Dorsolateral prefrontal cortex (tissue), 120 donors: ENCODE measurements at regions of chr15 and their contacts with region 1.

Region 1: DNA sequence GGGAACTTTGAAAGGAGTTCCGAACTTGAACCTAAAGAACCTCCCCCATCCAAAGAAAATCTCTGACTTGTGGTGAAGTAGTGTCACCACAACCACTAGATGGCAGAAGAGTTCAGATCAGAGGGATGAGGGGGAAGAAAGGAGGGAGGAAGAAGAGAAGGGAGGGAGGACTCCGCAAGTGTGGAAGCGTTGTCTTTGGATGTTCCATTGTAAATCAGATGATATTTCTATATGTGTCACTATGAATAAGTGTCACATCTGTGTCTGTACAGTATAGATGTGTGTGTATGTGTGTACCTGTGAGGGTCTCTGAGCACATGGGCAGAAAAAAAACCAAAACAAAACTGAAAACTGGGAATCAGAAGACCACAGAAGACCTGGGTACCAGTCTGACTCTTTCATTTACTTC is 16.9 kb downstream of the SLC24A1 start:
- DNase-seq: peak in 2 of 10 donors; percentile 17 to 33
- H3K4me3 ChIP-seq: peak overlapping the region in 53 of 59 donors; percentile 3 to 64 (median 39)
- H3K27ac ChIP-seq: no peak overlapping the region
- H3K27me3 ChIP-seq: no peaks in the 10 kb centered on the region
- CTCF ChIP-seq: peak; percentile 76 to 93 (median 85)

Region 2: DNA sequence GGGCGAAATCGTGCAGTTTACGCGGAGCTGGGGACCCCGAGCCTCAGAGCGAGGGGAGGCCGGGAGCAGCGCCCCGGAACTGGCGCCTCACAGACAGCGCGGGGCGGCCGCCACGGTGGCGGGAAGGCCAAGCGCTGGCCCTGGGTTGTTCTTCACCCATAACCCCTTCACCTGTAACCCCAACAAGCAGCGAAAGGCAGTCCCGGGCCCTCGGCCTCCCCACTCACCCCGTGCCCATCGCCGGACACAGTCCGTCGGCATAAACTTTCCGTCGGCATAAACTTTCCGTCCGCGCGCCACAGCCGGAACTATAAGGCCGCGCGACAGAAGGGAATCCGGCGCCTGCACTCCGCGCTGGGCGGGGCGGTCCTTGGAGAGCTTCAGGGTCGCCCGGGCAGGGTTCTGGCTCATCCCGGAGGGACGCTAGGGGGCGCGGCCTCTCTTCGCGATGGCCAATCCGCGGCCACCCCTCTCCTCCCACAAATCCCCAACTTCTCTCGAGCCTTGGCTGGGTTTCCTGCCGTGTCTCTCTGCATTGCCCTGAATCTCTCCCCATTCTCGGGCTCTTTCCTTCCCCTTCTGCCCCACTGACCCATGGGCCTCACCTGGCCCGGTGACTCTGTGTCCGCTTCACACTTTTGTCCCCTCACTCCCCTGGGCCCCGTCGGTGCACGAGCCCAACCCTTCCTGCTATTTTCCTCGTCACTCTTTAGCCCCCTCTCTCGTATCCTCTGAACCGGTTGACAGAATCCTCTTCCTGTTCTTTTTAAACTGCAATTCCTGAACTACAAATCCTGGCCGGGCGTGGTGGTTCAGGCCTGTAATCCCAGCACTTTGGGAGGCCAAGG is 27.6 kb before region 1 on chr15 and contains the start of gene INTS14:
- intact Hi-C with region 1: loop called in 1 of 2 experiments (anchors 1 kb)
- DNase-seq: peak; percentile 95 to 98 (median 97)
- H3K4me3 ChIP-seq: peak within 1 kb of the TSS; percentile 68 to 99 (median 91)
- H3K27ac ChIP-seq: peak within 1 kb of the TSS; percentile 66 to 98 (median 92)
- H3K27me3 ChIP-seq: no peaks in the 10 kb centered on the region
- CTCF ChIP-seq: peak; percentile 59 to 98 (median 88)
- total RNA-seq, gene INTS14: 16.3 to 35.6 (median 23.7) TPM

Region 3: DNA sequence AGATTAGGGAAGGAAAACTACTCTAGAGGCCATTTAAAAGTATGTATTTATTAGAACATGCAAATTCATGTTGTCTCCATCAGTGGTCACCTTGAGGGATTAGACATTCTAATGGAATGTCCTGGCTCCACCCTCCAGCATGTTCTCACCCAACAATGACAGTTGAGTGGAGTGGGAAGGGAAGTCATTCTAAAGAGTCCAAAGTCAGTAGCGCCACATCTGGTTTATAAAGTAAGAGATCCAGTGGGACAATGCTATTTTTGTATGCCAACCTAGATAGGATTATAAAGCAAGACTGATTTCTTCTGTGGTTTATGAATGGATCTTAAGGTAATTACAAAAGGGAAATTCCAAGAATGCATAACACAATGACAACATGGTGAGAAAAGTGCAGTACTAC is 16.3 kb after region 1 on chr15:
- intact Hi-C with region 1: no loop called
- DNase-seq: no peak
- H3K4me3 ChIP-seq: no peak overlapping the region
- H3K27ac ChIP-seq: peak overlapping the region in 1 of 59 donors; percentile 5
- H3K27me3 ChIP-seq: no peaks in the 10 kb centered on the region
- CTCF ChIP-seq: no peak

Region 4: GRCh38 chr15:65792130-65792987 is 153.7 kb after region 1 on chr15 and contains the start of gene DENND4A:
- intact Hi-C with region 1: loop called in 1 of 2 experiments (anchors 10 kb)
- DNase-seq: peak; percentile 94 to 98 (median 97)
- H3K4me3 ChIP-seq: peak within 1 kb of the TSS; percentile 48 to 95 (median 85)
- H3K27ac ChIP-seq: peak within 1 kb of the TSS; percentile 44 to 99 (median 97)
- H3K27me3 ChIP-seq: no peaks in the 10 kb centered on the region
- CTCF ChIP-seq: peak in 17 of 56 donors; percentile 2 to 50 (median 26)
- total RNA-seq, gene DENND4A: 52.0 to 89.8 (median 72.2) TPM

Region 5: DNA sequence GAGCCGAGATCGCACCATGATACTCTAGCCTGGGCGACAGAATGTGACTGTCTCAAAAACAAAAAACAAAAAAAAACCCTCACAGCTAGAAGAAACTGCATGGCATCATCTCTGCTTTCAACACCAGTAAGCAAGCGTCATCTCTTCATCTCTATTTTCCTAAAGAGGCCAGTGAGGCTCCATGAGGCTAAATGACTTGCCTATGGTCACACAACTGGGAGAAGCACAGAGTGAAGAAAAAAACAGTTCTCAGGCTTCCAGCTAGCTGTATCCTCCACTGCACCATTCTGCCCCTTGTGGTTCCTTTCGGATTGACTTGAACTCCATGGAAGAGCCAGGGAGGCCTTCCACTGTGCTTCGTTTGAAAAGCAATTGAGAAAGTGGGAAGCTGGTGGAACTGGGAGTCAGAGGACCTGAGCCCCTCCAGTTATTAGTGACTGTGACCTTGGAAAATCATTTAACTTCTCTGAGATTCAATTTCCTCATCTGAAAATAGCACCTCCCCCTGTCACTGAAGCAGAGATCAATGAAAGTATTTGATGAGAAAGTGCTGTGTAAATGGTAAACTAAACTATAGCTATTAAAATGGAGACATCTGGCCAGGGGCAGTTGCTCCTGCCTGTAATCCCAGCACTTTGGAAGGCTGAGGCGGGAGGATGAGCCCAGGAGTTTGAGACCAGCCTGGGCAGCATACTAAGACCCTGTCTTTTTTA is 185.5 kb after region 1 on chr15:
- intact Hi-C with region 1: loop called in 1 of 2 experiments (anchors 10 kb)
- DNase-seq: peak in 6 of 10 donors; percentile 10 to 54 (median 35)
- H3K4me3 ChIP-seq: no peak overlapping the region
- H3K27ac ChIP-seq: peak overlapping the region in 5 of 59 donors; percentile 1 to 35 (median 8)
- H3K27me3 ChIP-seq: no peaks in the 10 kb centered on the region
- CTCF ChIP-seq: peak in 55 of 56 donors; percentile 23 to 72 (median 58)

Region 6: GRCh38 chr15:65832549-65833364 is 194.1 kb after region 1 on chr15:
- intact Hi-C with region 1: loop called (anchors 10 kb)
- DNase-seq: peak in 9 of 10 donors; percentile 38 to 91 (median 48)
- H3K4me3 ChIP-seq: peak overlapping the region in 21 of 59 donors; percentile 0 to 42 (median 11)
- H3K27ac ChIP-seq: peak overlapping the region in 57 of 59 donors; percentile 12 to 89 (median 68)
- H3K27me3 ChIP-seq: no peaks in the 10 kb centered on the region
- CTCF ChIP-seq: peak in 2 of 56 donors; percentile 8 to 15

Region 7: DNA sequence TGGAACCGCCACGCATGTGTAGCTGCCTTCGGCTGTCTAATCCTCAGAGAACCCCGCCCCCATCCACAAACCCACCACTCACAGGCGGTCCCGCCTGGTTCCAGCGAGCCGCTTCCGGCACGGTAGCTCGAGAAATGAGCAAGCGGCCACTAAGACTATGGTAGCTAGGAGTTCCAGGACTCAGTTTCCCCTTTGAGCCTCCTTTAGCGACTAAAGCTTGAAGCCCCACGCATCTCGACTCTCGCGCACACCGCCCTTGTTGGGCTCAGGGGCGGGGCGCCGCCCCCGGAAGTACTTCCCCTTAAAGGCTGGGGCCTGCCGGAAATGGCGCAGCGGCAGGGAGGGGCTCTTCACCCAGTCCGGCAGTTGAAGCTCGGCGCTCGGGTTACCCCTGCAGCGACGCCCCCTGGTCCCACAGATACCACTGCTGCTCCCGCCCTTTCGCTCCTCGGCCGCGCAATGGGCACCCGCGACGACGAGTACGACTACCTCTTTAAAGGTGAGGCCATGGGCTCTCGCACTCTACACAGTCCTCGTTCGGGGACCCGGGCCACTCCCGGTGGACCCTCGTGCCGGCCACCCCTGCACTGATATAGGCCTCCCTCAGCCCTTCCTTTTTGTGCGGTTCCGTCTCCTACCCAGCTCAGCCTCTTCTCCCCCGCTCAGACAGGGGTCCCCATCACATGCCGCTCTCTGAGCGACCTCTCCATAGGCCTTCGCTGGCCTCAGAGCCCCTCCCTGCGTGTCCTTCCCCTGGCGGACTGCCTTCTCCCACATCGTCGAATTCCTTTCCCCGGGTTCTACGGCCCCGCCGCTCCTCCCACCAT is 230.7 kb after region 1 on chr15 and contains the start of gene RAB11A:
- intact Hi-C with region 1: loop called (anchors 5 to 10 kb)
- DNase-seq: peak; percentile 92 to 98 (median 96)
- H3K4me3 ChIP-seq: peak within 1 kb of the TSS; percentile 55 to 100 (median 95)
- H3K27ac ChIP-seq: peak within 1 kb of the TSS; percentile 69 to 100 (median 97)
- H3K27me3 ChIP-seq: no peaks in the 10 kb centered on the region
- CTCF ChIP-seq: peak in 54 of 56 donors; percentile 32 to 81 (median 58)
- total RNA-seq, gene RAB11A: 88.8 to 241 (median 186) TPM